Right ventricle myocardium superior (tissue), 1 donor: ENCODE measurements at regions of chr1 and their contacts with region 1.

Region 1: GRCh38 chr1:226547754-226548191 is 791 bp upstream of the STUM start:
- DNase-seq: peak; percentile 88
- ATAC-seq: peak; percentile 81

Region 2: DNA sequence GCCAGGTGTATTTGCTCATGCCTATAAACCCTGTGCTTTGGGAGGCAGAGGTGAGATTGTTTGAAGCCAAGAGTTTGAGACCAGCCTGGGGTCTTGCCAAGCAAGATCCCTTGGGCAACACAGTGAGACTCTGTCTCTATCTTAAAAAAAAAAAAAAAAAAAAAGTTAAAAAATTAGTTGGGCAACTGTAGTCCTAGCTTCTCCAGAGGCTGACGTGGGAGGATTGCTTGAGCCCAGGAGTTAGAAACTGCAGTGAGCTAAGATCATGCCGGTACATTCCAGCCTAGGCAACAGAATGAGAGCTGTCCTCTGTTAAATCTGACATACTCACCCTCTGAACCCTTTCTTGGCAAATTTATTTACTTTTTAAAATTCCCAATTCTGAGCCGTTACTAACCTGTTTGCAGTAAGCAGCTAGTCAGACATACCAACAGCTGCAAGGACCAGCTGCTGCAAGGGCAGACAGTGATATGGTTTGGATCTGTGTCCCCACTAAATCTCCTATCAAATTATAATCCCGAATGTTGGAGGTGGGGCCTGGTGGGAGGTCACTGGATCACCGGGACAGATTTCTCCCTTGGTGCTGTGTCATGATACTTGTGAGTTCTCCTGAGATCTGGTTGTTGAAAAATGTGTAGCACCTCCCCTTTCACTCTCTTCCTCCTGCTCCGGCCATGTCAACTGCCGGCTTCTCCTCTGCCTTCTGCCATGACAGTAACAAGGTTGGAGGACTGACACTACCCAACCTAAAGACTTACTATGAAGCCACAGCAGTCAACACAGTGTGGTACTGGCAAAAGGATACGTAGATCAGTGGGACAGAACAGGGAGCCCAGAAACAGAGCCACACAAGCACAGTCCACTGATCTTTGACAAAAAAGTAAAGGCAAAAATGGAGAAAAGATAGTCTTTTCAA is 150.5 kb before region 1 on chr1:
- intact Hi-C with region 1: no loop called
- DNase-seq: no peak
- ATAC-seq: peak; percentile 26

Region 3: GRCh38 chr1:226424228-226425003 is 123.4 kb before region 1 on chr1:
- intact Hi-C with region 1: loop called (anchors 5 kb)
- DNase-seq: no peak
- ATAC-seq: peak; percentile 90

Region 4: DNA sequence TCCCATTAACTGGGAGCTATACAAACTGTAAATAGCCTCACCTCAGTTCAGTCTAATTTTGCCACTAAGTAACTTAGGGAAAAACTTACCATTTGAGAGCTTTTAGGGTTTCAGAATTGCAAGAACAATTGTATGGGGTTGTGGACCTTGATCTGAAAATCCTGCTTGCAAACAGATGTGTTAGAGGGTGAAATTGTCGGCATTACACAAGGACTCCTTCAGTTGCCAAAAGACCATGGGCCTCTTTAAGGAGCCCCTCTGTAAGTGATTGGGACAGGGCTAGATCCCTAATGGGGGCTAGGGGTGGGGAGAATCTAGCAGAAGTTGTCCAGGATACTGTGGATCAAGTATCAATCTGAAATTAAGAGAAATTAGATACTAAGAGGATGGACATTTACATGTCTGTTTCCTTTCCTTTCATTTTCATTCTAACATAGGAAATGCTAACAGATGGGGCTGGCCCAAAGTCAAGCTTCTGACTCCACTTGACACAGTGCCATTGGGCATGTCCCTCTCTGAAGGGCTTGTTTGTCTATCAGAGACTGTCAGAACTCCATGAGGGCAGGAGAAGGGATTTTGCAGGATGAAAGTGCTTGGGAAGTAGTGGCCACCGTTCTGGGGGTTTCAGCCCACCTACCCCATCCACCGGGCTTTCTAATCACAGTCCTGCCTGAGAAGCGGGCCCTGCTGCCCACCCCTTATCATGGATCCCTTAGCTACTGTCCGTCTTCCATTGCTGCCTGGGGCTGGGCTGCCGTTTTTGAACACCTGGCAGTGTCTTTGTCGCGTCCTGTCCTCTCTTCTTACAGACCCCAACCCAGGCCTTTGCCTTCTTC is 55.5 kb after region 1 on chr1:
- intact Hi-C with region 1: loop called (anchors 5 kb)
- DNase-seq: peak; percentile 81
- ATAC-seq: peak; percentile 84

Region 5: GRCh38 chr1:226799634-226800281 is 252.0 kb after region 1 on chr1:
- intact Hi-C with region 1: no loop called
- DNase-seq: no peak
- ATAC-seq: no peak